ENCODE measurements at regions of chr19 and their contacts with region 1.

Region 1: DNA sequence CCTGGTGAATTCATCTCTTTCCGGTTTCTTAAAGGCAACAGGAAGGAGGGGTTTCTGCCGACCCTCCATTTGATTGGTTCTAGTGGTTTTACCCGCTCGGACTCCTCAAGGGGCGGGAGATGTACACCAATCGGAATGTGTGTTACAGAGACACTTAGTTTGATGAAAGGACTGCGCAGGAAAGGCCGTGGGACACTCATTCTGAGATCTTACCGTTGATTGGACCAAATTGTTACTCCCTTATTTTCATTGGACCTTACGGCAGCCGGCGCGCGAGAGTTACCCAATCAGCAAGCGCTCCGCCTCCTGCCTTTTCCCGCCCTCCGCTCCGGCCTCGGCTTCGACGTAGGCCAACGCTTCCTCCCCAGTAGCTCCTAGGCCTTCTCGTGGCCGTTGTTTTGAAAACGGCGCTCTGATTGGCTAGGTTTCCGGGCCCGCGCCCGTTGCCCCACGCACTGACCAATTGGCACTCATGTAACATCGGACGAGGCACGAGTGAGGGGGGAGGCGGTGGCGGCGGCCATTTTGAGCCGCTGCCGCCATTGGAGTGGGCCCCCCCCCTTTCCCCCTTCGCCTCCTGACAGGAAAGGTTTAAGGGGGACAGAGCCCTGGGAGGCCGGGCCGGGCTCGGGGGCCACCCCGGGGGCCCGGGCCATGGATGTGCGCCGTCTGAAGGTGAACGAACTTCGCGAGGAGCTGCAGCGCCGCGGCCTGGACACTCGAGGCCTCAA is at the start of gene HNRNPUL1:
- DNase-seq: peak; percentile 100
- ATAC-seq: peak; percentile 71 to 80
- H3K4me3 ChIP-seq: peak within 1 kb of the TSS; percentile 88
- H3K27ac ChIP-seq: peak within 1 kb of the TSS; percentile 96 to 99
- H3K4me1 ChIP-seq: peaks cover 26% of the 10 kb centered on the region
- CTCF ChIP-seq: peak; percentile 44
- EP300 ChIP-seq: no peak
- POLR2A ChIP-seq: peak; percentile 29
- RAD21 ChIP-seq: no peak
- polyA plus RNA-seq, gene HNRNPUL1: 89.5 and 117 TPM in 2 replicates

Region 2: GRCh38 chr19:40777937-40778705 is 485.9 kb before region 1 on chr19 and contains the start of gene RAB4B:
- CTCF ChIA-PET with region 1: no interaction called
- POLR2A ChIA-PET with region 1: interaction called, 12 read pairs
- DNase-seq: peak; percentile 100
- ATAC-seq: peak; percentile 86 to 93
- H3K4me3 ChIP-seq: peak within 1 kb of the TSS; percentile 52
- H3K27ac ChIP-seq: peak within 1 kb of the TSS; percentile 84 to 87
- H3K4me1 ChIP-seq: peaks cover 14% of the 10 kb centered on the region
- CTCF ChIP-seq: no peak
- EP300 ChIP-seq: no peak
- POLR2A ChIP-seq: peak; percentile 61
- RAD21 ChIP-seq: no peak
- polyA plus RNA-seq, gene RAB4B: 20.7 and 25.0 TPM in 2 replicates

Region 3: DNA sequence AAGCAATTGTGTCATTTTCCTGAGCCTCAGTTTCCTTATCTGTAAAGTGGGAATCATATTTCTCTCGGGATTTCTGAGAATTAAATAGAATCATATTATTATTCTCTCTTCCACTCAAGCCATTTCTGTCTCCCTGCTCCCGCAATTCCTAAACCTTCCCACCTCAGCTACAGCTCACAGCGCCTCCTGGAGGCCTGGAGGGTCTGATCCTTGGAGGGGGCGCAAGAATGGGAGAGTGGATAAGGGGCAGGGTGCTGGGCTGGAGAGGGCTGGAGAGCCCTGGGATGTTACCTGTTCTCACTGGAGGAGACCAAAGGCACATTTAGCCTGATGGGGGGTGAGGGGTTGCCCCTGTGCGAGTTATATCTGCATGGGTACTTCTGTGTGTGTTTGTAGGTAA is 102.1 kb before region 1 on chr19:
- CTCF ChIA-PET with region 1: interaction called, 10 read pairs
- POLR2A ChIA-PET with region 1: interaction called, 6 read pairs
- DNase-seq: peak in 1 of 2 experiments; percentile 74
- ATAC-seq: peak in 1 of 2 experiments; percentile 20; a peak in 3 of 6 replicates
- H3K4me3 ChIP-seq: no peak overlapping the region
- H3K27ac ChIP-seq: no peak overlapping the region
- H3K4me1 ChIP-seq: peaks cover 19% of the 10 kb centered on the region
- CTCF ChIP-seq: peak; percentile 40
- EP300 ChIP-seq: no peak
- POLR2A ChIP-seq: no peak
- RAD21 ChIP-seq: peak in 1 of 2 experiments; percentile 20; a peak in 1 of 5 replicates

Region 4: GRCh38 chr19:41218615-41219507 is 45.2 kb before region 1 on chr19 and contains the start of gene AXL:
- CTCF ChIA-PET with region 1: interaction called, 1,023 read pairs
- POLR2A ChIA-PET with region 1: interaction called, 85 read pairs
- DNase-seq: peak; percentile 90 to 97
- ATAC-seq: peak; percentile 75 to 80
- H3K4me3 ChIP-seq: peak within 1 kb of the TSS; percentile 61
- H3K27ac ChIP-seq: peak within 1 kb of the TSS; percentile 85 to 91
- H3K4me1 ChIP-seq: peaks cover 53% of the 10 kb centered on the region
- CTCF ChIP-seq: no peak
- EP300 ChIP-seq: peak in 1 of 2 experiments; percentile 20; a peak in 1 of 5 replicates
- POLR2A ChIP-seq: peak; percentile 59
- RAD21 ChIP-seq: no peak; a peak in 1 of 5 replicates
- polyA plus RNA-seq, gene AXL: 60.1 and 60.3 TPM in 2 replicates

Region 5: DNA sequence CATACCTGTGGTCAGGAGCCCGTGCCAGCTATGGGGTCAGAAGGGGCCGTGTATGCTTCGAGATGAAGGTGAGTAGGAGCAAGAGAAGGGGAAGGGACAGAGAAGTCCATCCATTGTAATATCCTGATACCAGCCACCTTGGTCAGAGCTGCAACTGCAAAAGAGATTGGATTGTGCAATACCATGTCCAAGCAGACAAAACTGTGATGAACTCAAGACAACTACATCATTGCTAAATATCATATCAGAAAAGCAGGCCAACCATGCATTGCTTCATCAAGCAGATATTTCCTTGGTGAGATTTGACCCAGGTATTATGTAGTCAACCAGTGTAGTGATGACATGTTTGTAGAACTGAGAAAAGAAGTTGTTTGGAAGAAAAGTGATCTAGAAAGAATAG is 12.2 kb after region 1 on chr19:
- CTCF ChIA-PET with region 1: interaction called, 25 read pairs
- POLR2A ChIA-PET with region 1: interaction called, 7 read pairs
- DNase-seq: no peak
- ATAC-seq: no peak; a peak in 1 of 6 replicates
- H3K4me3 ChIP-seq: no peak overlapping the region
- H3K27ac ChIP-seq: no peak overlapping the region
- H3K4me1 ChIP-seq: no peaks in the 10 kb centered on the region
- CTCF ChIP-seq: no peak
- EP300 ChIP-seq: no peak
- POLR2A ChIP-seq: no peak
- RAD21 ChIP-seq: no peak

Region 6: GRCh38 chr19:41321600-41322270 is 57.7 kb after region 1 on chr19:
- CTCF ChIA-PET with region 1: interaction called, 10 read pairs
- POLR2A ChIA-PET with region 1: interaction called, 5 read pairs
- DNase-seq: peak; percentile 76 to 95
- ATAC-seq: peak; percentile 10 to 53; a peak in 3 of 6 replicates
- H3K4me3 ChIP-seq: no peak overlapping the region
- H3K27ac ChIP-seq: peak overlapping the region; percentile 81 to 91; a peak in 5 of 6 replicates
- H3K4me1 ChIP-seq: peaks cover 56% of the 10 kb centered on the region
- CTCF ChIP-seq: peak; percentile 88
- EP300 ChIP-seq: no peak
- POLR2A ChIP-seq: no peak
- RAD21 ChIP-seq: peak; percentile 61 to 62; a peak in 4 of 5 replicates

Region 7: DNA sequence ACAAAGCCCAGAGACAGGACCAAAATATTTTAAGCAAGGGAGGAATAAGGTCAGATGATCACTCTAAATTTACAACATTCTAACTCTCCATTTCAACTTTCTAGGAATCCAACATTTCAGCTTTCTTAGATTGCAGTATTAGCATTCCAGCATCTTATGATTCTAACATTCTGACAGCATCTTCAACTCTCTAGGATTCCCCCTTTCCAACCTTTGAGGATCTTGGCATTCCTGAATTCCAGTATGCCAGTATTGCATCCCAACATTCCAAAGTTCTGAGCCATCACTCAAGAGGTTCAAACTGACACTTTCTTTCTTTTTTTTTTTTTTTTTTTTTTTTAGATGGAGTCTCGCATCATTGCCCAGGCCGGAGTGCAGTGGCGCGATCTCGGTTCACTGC is 75.9 kb after region 1 on chr19:
- CTCF ChIA-PET with region 1: no interaction called
- POLR2A ChIA-PET with region 1: no interaction called
- DNase-seq: peak; percentile 66 to 83
- ATAC-seq: peak; percentile 64 to 72; a peak in 5 of 6 replicates
- H3K4me3 ChIP-seq: no peak overlapping the region
- H3K27ac ChIP-seq: no peak overlapping the region
- H3K4me1 ChIP-seq: peaks cover 9% of the 10 kb centered on the region
- CTCF ChIP-seq: no peak
- EP300 ChIP-seq: no peak
- POLR2A ChIP-seq: no peak
- RAD21 ChIP-seq: no peak

Measured in A549 (cell line).